ENCODE measurements at regions of chr11 and their contacts with region 1.

Region 1: DNA sequence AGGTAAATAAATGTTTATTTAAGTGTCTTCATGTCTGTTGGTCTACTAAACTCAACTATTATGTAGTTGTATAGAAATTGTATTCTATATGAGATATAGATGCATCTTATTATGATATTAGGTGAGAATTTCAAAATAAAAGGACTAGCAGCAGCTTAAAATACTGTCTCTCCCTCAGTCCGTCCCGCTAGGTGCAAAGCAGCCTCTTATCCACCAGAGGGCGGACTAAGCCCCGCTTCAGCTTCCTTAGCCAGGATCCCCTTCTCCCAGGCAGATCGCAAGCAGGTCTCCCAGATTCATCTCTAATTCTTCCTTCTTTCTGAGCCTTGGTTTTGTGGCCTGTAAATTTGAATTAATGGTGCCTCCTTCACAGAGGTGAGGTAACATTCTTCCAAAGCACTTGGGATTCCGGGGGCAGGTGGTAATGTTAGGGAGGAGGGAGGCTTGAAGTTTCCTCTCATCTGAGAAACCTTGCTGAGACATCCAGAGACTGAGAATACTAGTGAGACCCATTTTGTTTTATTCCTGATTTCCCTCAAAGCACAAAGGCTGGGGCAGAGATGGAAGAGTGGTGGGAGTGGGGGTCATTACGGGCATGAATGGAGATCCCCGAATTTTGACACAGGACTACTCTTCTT is 13.5 kb upstream of the INSC start:
- DNase-seq: peak in 1 of 2 experiments; percentile 41
- H3K4me3 ChIP-seq: no peak overlapping the region
- H3K27ac ChIP-seq: no peak overlapping the region
- H3K4me1 ChIP-seq: peaks cover 9% of the 10 kb centered on the region
- H3K27me3 ChIP-seq: no peaks in the 10 kb centered on the region
- CTCF ChIP-seq: peak; percentile 81

Region 2: DNA sequence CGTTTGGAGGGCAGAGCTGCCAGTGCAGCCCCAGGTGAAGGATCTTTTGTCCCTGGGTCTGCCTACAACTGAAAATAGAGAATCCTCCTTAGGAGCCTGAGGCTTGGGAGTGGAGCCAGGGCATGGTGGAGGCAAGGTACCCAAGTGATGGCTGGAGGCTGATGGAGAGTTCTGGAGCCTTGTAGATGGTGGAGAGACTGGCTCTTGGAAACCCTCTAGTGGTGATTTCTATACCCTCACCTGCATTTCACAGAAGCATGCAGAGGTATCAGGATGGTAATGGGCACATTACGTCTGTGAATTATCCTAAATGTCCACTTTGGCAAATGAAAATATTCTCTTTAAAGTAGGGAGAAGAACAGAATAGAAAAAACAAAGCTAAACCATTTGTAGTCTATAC is 57.9 kb after region 1 on chr11:
- CTCF ChIA-PET with region 1: no interaction called
- POLR2A ChIA-PET with region 1: no interaction called
- intact Hi-C with region 1: loop called (anchors 2 kb)
- DNase-seq: no peak
- H3K4me3 ChIP-seq: no peak overlapping the region
- H3K27ac ChIP-seq: no peak overlapping the region
- H3K4me1 ChIP-seq: peaks cover 8% of the 10 kb centered on the region
- H3K27me3 ChIP-seq: no peaks in the 10 kb centered on the region
- CTCF ChIP-seq: peak; percentile 57

Region 3: GRCh38 chr11:15208378-15209222 is 107.4 kb after region 1 on chr11:
- CTCF ChIA-PET with region 1: no interaction called
- POLR2A ChIA-PET with region 1: no interaction called
- intact Hi-C with region 1: loop called (anchors 2 kb)
- DNase-seq: peak in 1 of 2 experiments; percentile 41
- H3K4me3 ChIP-seq: no peak overlapping the region
- H3K27ac ChIP-seq: no peak overlapping the region
- H3K4me1 ChIP-seq: no peaks in the 10 kb centered on the region
- H3K27me3 ChIP-seq: no peaks in the 10 kb centered on the region
- CTCF ChIP-seq: peak; percentile 84

Region 4: GRCh38 chr11:16613512-16614381 is 1512.6 kb after region 1 on chr11:
- CTCF ChIA-PET with region 1: interaction called, 3 read pairs
- POLR2A ChIA-PET with region 1: no interaction called
- intact Hi-C with region 1: loop called (anchors 5 kb)
- DNase-seq: peak; percentile 51 to 74
- H3K4me3 ChIP-seq: peak overlapping the region; percentile 54
- H3K27ac ChIP-seq: no peak overlapping the region
- H3K4me1 ChIP-seq: no peaks in the 10 kb centered on the region
- H3K27me3 ChIP-seq: no peaks in the 10 kb centered on the region
- CTCF ChIP-seq: peak; percentile 77